Natural killer cell (primary cell): ENCODE measurements at regions of chr5 and their contacts with region 1.

Region 1: DNA sequence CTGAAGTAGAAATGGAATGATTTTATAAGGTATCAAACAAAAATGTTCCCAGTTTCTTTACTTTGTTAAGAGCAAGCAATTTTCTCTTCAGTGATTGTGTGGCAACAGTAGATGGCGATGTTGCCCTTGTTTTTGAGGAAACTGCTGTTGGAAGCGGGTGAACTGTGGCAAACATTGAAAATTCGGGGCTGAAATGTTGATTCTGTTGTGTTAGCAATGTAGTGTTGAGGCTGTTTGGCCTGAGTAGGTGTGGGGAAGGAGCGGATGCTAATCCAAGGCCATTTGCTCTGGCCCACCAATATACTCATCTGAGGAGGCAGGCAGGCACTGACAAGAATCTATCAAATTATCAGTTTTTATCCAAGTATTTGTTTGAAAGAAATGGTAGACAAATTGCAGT is 129.8 kb downstream of the SLC12A2 start:
- DNase-seq: peak in 1 of 2 donors; percentile 67
- ATAC-seq: peak in 1 of 3 donors; percentile 35
- H3K4me3 ChIP-seq: no peak overlapping the region
- H3K4me3 Mint-ChIP-seq: no peak overlapping the region
- H3K27ac ChIP-seq: no peak overlapping the region
- H3K27ac Mint-ChIP-seq: no peak overlapping the region
- H3K4me1 ChIP-seq: no peaks in the 10 kb centered on the region
- H3K4me1 Mint-ChIP-seq: no peaks in the 10 kb centered on the region
- H3K27me3 ChIP-seq: no peaks in the 10 kb centered on the region
- H3K27me3 Mint-ChIP-seq: peaks cover 0 to 7% of the 10 kb centered on the region in 2 donors
- CTCF ChIP-seq: peak; percentile 26

Region 2: DNA sequence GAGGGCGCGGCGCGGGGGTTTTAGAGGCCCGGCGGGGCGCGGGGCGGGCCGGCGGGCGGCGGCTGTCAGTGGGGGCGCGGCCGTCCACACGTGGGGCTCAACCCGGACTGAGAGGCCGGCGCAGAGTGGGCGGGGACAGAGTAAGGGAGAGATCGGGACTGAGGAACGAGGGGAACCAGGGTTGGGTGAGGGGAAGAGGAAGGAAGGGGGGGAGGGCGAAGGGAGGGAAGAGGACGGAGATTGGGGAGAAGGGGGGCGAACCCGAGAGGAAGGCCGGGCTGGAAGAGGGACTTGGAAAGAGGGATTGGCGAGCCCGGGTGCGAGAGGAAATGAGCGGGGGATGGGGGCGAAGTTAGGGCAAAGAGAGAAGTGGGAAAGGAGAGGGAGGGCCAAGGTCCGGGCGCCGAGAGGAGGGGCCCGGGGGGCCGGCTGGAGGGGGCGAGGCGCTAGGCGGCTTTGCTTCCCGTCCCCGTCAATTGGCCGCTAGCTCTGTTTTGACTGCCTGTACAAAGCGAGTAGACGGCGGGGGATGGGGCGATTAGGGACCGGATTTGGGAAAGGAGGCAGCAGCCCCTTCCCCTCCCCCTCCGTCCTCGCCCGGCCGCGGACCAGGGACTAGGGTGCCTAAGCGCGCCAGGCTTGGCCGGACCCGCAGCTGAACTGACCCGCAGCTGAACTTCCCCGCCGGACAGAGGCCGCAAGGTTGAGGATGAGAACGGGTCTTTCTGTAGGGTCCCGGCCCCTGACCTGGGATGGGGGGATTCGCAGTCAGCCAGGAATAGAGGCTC is 325.1 kb after region 1 on chr5:
- intact Hi-C with region 1: no loop called
- DNase-seq: no peak
- ATAC-seq: peak in 1 of 3 donors; percentile 57
- H3K4me3 ChIP-seq: no peak overlapping the region
- H3K4me3 Mint-ChIP-seq: no peak overlapping the region
- H3K27ac ChIP-seq: no peak overlapping the region
- H3K27ac Mint-ChIP-seq: no peak overlapping the region
- H3K4me1 ChIP-seq: no peaks in the 10 kb centered on the region
- H3K4me1 Mint-ChIP-seq: no peaks in the 10 kb centered on the region
- H3K27me3 ChIP-seq: peaks cover 17% of the 10 kb centered on the region
- H3K27me3 Mint-ChIP-seq: peaks cover 26 to 29% of the 10 kb centered on the region in 2 donors
- CTCF ChIP-seq: no peak

Region 3: DNA sequence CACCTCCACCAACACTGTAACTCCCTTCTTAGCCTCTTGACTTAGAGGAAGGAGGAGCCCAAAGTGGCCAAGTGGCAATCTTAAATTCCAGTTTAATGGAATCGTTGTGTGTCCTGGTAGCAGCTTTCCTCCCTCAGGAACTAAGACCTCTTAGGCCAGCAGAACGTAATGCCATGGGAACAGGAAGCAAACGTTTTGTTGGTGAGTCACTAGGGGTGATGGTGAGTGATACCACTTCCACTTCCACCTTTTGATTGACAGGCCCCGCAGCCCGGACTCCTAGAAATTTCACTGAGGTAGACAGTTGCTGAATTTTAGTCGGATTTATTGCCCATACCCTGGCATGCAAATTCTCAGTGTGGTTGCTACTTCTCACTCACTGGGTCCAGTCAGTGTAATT is 418.9 kb after region 1 on chr5:
- intact Hi-C with region 1: no loop called
- DNase-seq: no peak
- ATAC-seq: no peak
- H3K4me3 ChIP-seq: no peak overlapping the region
- H3K4me3 Mint-ChIP-seq: no peak overlapping the region
- H3K27ac ChIP-seq: no peak overlapping the region
- H3K27ac Mint-ChIP-seq: no peak overlapping the region
- H3K4me1 ChIP-seq: no peaks in the 10 kb centered on the region
- H3K4me1 Mint-ChIP-seq: no peaks in the 10 kb centered on the region
- H3K27me3 ChIP-seq: no peaks in the 10 kb centered on the region
- H3K27me3 Mint-ChIP-seq: no peaks in the 10 kb centered on the region
- CTCF ChIP-seq: no peak

Region 4: GRCh38 chr5:129767906-129768380 is 1554.6 kb after region 1 on chr5:
- intact Hi-C with region 1: loop called (anchors 5 kb)
- DNase-seq: peak in 1 of 2 donors; percentile 81
- ATAC-seq: peak; percentile 53 to 70 (median 64)
- H3K4me3 ChIP-seq: no peak overlapping the region
- H3K4me3 Mint-ChIP-seq: no peak overlapping the region
- H3K27ac ChIP-seq: no peak overlapping the region
- H3K27ac Mint-ChIP-seq: no peak overlapping the region
- H3K4me1 ChIP-seq: no peaks in the 10 kb centered on the region
- H3K4me1 Mint-ChIP-seq: no peaks in the 10 kb centered on the region
- H3K27me3 ChIP-seq: no peaks in the 10 kb centered on the region
- H3K27me3 Mint-ChIP-seq: no peaks in the 10 kb centered on the region
- CTCF ChIP-seq: peak; percentile 74

Region 5: GRCh38 chr5:129852747-129853352 is 1639.5 kb after region 1 on chr5:
- intact Hi-C with region 1: loop called (anchors 10 kb)
- DNase-seq: peak; percentile 33 to 75
- ATAC-seq: peak; percentile 38 to 79 (median 61)
- H3K4me3 ChIP-seq: no peak overlapping the region
- H3K4me3 Mint-ChIP-seq: no peak overlapping the region
- H3K27ac ChIP-seq: no peak overlapping the region
- H3K27ac Mint-ChIP-seq: no peak overlapping the region
- H3K4me1 ChIP-seq: no peaks in the 10 kb centered on the region
- H3K4me1 Mint-ChIP-seq: no peaks in the 10 kb centered on the region
- H3K27me3 ChIP-seq: no peaks in the 10 kb centered on the region
- H3K27me3 Mint-ChIP-seq: no peaks in the 10 kb centered on the region
- CTCF ChIP-seq: peak; percentile 74